ENCODE measurements at regions of chr11 and their contacts with region 1.

Region 1: GRCh38 chr11:7513234-7514098 is at the start of gene PPFIBP2:
- DNase-seq: peak; percentile 64
- ATAC-seq: peak; percentile 94
- H3K4me3 ChIP-seq: peak within 1 kb of the TSS; percentile 91
- H3K27ac ChIP-seq: no peak within 1 kb of the TSS
- H3K4me1 ChIP-seq: peaks cover 6% of the 10 kb centered on the region; the same call in 1 of the 2 replicates
- H3K27me3 ChIP-seq: peaks cover 38% of the 10 kb centered on the region
- CTCF ChIP-seq: peak; percentile 81
- total RNA-seq, gene PPFIBP2: 3.2 and 3.3 TPM in 2 replicates

Region 2: GRCh38 chr11:7467652-7468051 is 45.8 kb before region 1 on chr11:
- CTCF ChIA-PET with region 1: no interaction called
- POLR2A ChIA-PET with region 1: no interaction called
- intact Hi-C with region 1: no loop called
- DNase-seq: no peak
- ATAC-seq: no peak
- H3K4me3 ChIP-seq: no peak overlapping the region
- H3K27ac ChIP-seq: no peak overlapping the region
- H3K4me1 ChIP-seq: no peaks in the 10 kb centered on the region
- H3K27me3 ChIP-seq: no peaks in the 10 kb centered on the region
- CTCF ChIP-seq: no peak

Region 3: DNA sequence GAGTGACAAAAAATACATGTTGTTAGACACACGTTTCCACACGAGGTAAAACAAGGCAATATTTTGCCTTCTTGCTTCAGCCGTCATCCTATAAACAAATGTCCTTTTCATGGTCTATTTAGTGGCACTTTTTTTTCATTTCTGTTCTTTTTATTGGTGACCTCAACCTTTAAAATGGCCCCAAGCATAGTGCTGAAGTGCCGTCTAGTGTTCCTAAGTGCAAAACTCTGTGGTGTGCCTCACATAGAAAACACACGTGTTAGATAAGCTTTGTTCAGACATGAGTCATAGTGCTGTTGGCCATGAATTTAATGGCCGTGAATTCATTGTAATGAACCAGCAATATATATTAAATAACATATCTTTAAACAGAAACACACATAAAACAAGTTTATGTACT is 177.2 kb after region 1 on chr11:
- CTCF ChIA-PET with region 1: no interaction called
- POLR2A ChIA-PET with region 1: no interaction called
- intact Hi-C with region 1: loop called (anchors 5 kb)
- DNase-seq: peak; percentile 50
- ATAC-seq: no peak; the same call in 1 of the 2 replicates
- H3K4me3 ChIP-seq: no peak overlapping the region
- H3K27ac ChIP-seq: no peak overlapping the region
- H3K4me1 ChIP-seq: no peaks in the 10 kb centered on the region
- H3K27me3 ChIP-seq: peaks cover 35% of the 10 kb centered on the region
- CTCF ChIP-seq: no peak

Measured in PC-3 (cell line).